Heart right ventricle (tissue), 16 donors: ENCODE measurements at regions of chr9 and their contacts with region 1.

Region 1: DNA sequence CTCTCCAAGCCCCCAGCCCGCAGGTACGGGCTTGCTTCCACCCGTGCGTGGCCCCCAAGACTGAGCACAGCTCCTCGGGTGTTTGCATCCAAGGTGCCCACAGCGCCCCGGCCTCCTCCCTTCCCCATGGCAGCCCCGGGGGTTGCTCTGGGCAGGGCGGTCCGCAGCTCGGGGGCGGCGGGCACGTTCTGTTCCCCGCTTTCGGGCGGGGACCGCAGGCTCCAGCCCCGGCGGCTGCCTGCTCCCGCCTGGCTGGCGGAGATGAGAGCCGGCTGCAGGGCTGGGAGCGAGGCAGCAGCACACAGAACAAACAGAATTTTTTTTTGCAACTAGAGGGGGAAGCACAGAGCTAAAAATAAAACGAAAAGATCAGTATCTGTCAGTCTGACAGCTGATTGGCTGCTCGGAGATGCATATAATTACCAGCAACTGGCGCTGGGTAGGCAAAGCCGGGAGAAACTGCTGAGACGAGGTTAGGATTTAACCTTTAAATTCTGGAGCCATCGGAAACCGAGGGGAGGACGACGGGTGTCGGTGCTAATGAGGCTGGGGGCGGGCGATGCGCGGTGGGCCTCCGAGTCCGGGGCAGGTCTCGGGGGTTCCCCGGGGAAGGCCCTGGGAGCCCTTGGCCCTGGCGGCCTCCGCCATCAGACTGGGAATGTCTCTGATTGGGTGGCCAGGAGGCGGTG is 142.7 kb upstream of the IER5L start:
- DNase-seq: peak; percentile 68 to 74
- ATAC-seq: peak; percentile 76 to 85 (median 83)
- H3K4me3 ChIP-seq: peak overlapping the region; percentile 3 to 63 (median 51)
- H3K27ac ChIP-seq: peak overlapping the region; percentile 85 to 95 (median 90)
- H3K4me1 ChIP-seq: peaks cover 29 to 85% (median 61%) of the 10 kb centered on the region in 9 donors
- H3K27me3 ChIP-seq: no peaks in the 10 kb centered on the region
- CTCF ChIP-seq: peak in 8 of 9 donors; percentile 6 to 47 (median 38)

Region 2: GRCh38 chr9:129258124-129258822 is 62.4 kb before region 1 on chr9:
- intact Hi-C with region 1: loop called in 2 of 10 experiments (anchors 5 kb)
- DNase-seq: peak; percentile 91 to 94
- ATAC-seq: peak; percentile 70 to 85 (median 80)
- H3K4me3 ChIP-seq: peak overlapping the region in 8 of 10 donors; percentile 5 to 46 (median 34)
- H3K27ac ChIP-seq: peak overlapping the region in 6 of 10 donors; percentile 9 to 59 (median 51)
- H3K4me1 ChIP-seq: peaks cover 5 to 53% (median 36%) of the 10 kb centered on the region in 9 donors
- H3K27me3 ChIP-seq: peaks cover 0 to 19% (median 0%) of the 10 kb centered on the region in 7 donors
- CTCF ChIP-seq: no peak

Region 3: DNA sequence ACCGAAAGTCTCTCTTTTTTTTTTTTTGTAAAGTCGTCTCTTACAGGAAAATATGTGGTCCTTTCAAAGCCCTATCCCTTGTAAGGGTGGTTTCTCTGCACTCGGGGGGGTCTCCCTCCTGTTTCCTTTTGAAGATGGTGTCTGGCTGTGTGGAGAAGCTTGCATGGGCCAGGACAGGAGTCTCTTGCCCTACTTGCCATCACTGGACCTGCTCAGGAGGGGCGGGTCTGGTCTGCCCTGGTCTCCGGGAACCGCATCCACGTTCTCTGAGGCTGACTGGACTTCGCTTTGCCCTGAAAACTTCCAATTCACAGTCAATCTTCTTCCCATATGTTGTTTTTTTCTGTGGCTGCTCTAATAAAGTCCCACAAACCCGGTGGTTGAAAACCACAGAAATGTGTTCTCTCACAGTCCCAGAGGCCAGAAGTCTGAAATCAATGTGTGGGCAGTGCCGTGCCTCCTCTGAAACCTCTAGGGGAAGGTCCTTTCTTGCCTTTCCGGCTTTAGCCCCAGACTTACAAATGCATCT is 49.8 kb before region 1 on chr9:
- intact Hi-C with region 1: no loop called
- DNase-seq: no peak
- ATAC-seq: no peak
- H3K4me3 ChIP-seq: no peak overlapping the region
- H3K27ac ChIP-seq: peak overlapping the region in 3 of 10 donors; percentile 15 to 36 (median 15)
- H3K4me1 ChIP-seq: peaks cover 0 to 16% (median 0%) of the 10 kb centered on the region in 9 donors
- H3K27me3 ChIP-seq: peaks cover 0 to 5% (median 0%) of the 10 kb centered on the region in 7 donors
- CTCF ChIP-seq: no peak

Region 4: GRCh38 chr9:129336601-129337331 is 16.0 kb after region 1 on chr9:
- intact Hi-C with region 1: no loop called
- DNase-seq: no peak
- ATAC-seq: peak in 2 of 8 donors; percentile 2 to 14
- H3K4me3 ChIP-seq: peak overlapping the region; percentile 16 to 61 (median 44)
- H3K27ac ChIP-seq: peak overlapping the region in 9 of 10 donors; percentile 6 to 96 (median 86)
- H3K4me1 ChIP-seq: peaks cover 19 to 69% (median 52%) of the 10 kb centered on the region in 9 donors
- H3K27me3 ChIP-seq: no peaks in the 10 kb centered on the region
- CTCF ChIP-seq: no peak

Region 5: DNA sequence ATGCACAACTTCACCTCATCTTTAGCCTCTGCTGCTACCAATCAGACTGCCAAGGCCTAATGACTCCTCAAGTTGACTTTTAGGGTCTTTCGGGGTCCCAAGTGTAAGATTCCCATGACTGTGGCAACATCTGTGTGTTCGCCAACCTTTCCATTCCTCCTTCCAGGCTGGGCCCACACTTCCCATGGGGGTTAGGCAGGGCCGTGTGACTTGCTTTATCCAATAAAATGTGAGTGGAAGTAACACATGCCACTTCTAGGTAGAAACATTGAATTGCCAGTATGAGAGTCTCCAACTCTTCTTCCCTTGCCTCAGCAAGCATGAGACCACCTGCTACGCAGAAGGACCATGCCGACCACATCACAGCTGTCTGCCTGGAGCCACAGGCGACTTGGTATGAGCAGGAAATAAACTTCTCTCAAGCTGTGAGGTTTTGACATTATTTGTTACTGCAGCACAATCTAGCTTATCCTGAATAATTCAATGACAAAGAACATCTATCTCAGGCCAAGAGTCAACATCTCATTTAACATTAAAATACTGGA is 47.8 kb after region 1 on chr9:
- intact Hi-C with region 1: no loop called
- DNase-seq: no peak
- ATAC-seq: no peak
- H3K4me3 ChIP-seq: no peak overlapping the region
- H3K27ac ChIP-seq: no peak overlapping the region
- H3K4me1 ChIP-seq: no peaks in the 10 kb centered on the region
- H3K27me3 ChIP-seq: no peaks in the 10 kb centered on the region
- CTCF ChIP-seq: no peak

Region 6: GRCh38 chr9:129406278-129407225 is 85.8 kb after region 1 on chr9:
- intact Hi-C with region 1: loop called in 2 of 10 experiments (anchors 5 kb)
- DNase-seq: peak in 1 of 2 donors; percentile 23
- ATAC-seq: peak in 1 of 8 donors; percentile 33
- H3K4me3 ChIP-seq: no peak overlapping the region
- H3K27ac ChIP-seq: no peak overlapping the region
- H3K4me1 ChIP-seq: peaks cover 6 to 31% (median 11%) of the 10 kb centered on the region in 9 donors
- H3K27me3 ChIP-seq: no peaks in the 10 kb centered on the region
- CTCF ChIP-seq: no peak